SK-N-SH (cell line): ENCODE measurements at regions of chr14 and their contacts with region 1.

Region 1: DNA sequence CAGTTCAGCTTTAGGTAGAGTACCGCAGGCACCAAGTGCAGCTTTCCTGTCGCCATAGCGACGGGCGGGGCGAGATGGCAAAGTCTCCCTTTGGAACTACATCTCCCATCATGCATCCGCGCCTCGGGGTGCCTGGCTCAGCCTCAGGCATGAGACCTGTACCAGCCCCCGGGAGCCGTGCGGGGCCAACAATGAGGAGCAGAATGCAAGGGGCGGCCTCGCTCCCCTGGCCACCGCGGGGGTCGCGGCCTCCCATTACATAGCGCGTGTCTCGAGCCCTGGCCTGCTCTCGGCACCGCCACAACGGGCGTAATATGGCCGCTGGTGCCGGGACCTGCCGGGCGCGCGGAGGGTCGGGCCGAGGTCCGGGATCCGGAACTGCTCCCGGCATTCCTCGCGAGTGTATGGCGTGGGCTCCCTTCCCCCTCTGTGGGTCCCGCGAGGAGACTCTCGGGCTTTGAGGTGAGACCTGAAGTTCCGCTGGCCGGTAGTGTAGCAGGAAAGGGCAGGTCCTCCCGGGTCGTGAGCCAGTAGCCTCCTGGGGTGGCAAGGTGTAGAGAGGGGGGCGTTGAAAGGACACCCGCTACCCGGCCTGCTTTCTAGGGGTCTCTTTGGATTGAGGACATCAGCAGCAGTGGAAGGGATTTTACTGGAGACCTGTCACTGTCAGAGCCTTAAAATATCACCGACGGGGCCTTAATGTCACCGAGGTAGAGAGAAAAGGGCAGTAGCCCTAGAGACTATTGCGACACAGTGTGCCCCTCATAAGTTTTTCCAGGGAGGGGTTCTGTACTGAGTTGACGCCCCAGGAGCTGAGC is at the start of gene THTPA:
- DNase-seq: peak; percentile 92
- H3K4me3 ChIP-seq: peak within 1 kb of the TSS; percentile 76 to 93
- H3K27ac ChIP-seq: peak within 1 kb of the TSS; percentile 74 to 91
- H3K4me1 ChIP-seq: peaks cover 5 to 15% of the 10 kb centered on the region in 2 experiments; a peak in 1 of 4 replicates
- H3K27me3 ChIP-seq: no peaks in the 10 kb centered on the region
- CTCF ChIP-seq: no peak
- EP300 ChIP-seq: no peak
- RAD21 ChIP-seq: no peak
- polyA plus RNA-seq, gene THTPA: 15.5 and 16.3 TPM in 2 replicates

Region 2: DNA sequence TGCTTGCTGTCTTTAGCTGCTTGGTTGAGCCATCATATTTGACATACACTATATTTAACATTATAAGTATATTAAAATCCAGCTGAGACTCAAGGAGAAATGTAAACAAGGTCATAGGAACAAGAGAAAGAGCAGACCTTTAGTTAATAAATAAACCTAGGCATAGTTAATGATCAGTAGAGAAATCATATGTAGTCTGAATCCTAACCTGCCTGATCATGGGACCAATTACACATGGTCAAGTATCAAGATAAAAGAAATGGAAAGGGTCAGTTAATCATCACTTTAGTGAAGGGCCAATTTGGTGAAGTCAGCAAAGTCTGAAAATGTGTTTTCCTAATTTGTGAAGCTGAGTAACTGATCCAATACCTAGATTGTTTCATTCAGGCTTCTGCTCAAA is 310.8 kb before region 1 on chr14:
- CTCF ChIA-PET with region 1: no interaction called
- POLR2A ChIA-PET with region 1: no interaction called
- DNase-seq: no peak
- H3K4me3 ChIP-seq: no peak overlapping the region
- H3K27ac ChIP-seq: no peak overlapping the region
- H3K4me1 ChIP-seq: no peaks in the 10 kb centered on the region
- H3K27me3 ChIP-seq: peaks cover 29% of the 10 kb centered on the region; the same call in 1 of the 2 replicates
- CTCF ChIP-seq: no peak
- EP300 ChIP-seq: no peak
- RAD21 ChIP-seq: no peak

Region 3: DNA sequence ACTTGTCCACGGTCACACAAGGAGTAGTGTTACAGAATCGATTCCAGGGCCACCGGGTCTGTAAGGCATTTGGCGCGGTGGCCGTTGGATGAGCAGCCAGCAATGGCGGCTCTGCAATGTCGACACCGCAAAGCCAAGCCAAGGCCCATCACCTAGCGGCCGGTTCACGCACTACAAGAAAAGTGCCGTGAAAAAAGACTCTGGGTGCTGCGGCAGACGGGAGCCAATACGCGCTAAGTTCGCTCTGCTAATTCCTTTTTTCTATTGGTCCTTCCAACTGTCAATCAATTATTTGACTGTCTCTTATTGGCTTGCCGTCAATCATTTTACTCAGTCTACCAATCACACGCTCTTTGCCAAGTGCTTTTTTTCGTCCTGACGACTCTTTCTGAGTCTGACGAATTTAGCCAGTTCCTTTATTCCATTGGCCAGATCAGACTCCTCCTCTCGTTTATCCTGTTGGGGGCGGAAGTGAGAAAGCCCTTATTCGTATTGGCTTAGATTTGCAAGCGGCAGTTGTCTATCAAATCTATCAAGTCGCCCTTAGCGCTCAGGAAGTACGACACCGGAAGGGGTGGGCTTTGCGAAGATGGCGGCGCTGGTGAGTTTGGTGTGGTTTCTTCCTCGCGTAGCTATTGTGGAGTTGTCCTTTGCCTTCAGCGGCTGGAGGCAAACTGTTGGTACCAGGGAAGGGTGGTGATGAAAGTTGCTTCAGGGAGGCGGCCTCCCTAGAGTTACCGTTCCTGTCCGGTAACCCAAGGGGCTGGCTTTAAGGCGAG is 86.8 kb before region 1 on chr14 and contains the start of gene NGDN:
- CTCF ChIA-PET with region 1: interaction called, 785 read pairs
- POLR2A ChIA-PET with region 1: interaction called, 3 read pairs
- DNase-seq: peak; percentile 86
- H3K4me3 ChIP-seq: peak within 1 kb of the TSS; percentile 92 to 96
- H3K27ac ChIP-seq: peak within 1 kb of the TSS; percentile 61 to 88
- H3K4me1 ChIP-seq: peaks cover 0 to 7% of the 10 kb centered on the region in 2 experiments; a peak in 2 of 4 replicates
- H3K27me3 ChIP-seq: no peaks in the 10 kb centered on the region
- CTCF ChIP-seq: peak; percentile 78
- EP300 ChIP-seq: no peak
- RAD21 ChIP-seq: peak; percentile 69
- polyA plus RNA-seq, gene NGDN: 64.3 and 85.9 TPM in 2 replicates

Region 4: GRCh38 chr14:23512156-23512555 is 43.9 kb before region 1 on chr14:
- CTCF ChIA-PET with region 1: interaction called, 40 read pairs
- POLR2A ChIA-PET with region 1: interaction called, 4 read pairs
- DNase-seq: peak; percentile 77
- H3K4me3 ChIP-seq: peak overlapping the region in 1 of 2 experiments; percentile 34; a peak in 2 of 4 replicates
- H3K27ac ChIP-seq: peak overlapping the region in 1 of 2 experiments; percentile 63; a peak in 1 of 4 replicates
- H3K4me1 ChIP-seq: peaks cover 0 to 38% of the 10 kb centered on the region in 2 experiments; a peak in 1 of 4 replicates
- H3K27me3 ChIP-seq: no peaks in the 10 kb centered on the region
- CTCF ChIP-seq: no peak
- EP300 ChIP-seq: no peak
- RAD21 ChIP-seq: no peak

Region 5: GRCh38 chr14:23567192-23568020 is 11.3 kb after region 1 on chr14 and contains the start of gene AP1G2:
- CTCF ChIA-PET with region 1: interaction called, 67 read pairs
- POLR2A ChIA-PET with region 1: interaction called, 5 read pairs
- DNase-seq: peak; percentile 92
- H3K4me3 ChIP-seq: peak within 1 kb of the TSS; percentile 64 to 86
- H3K27ac ChIP-seq: peak within 1 kb of the TSS; percentile 39 to 82; a peak in 3 of 4 replicates
- H3K4me1 ChIP-seq: peaks cover 0 to 34% of the 10 kb centered on the region in 2 experiments; a peak in 1 of 4 replicates
- H3K27me3 ChIP-seq: no peaks in the 10 kb centered on the region
- CTCF ChIP-seq: 0 out of 2 replicates have a peak, but pooled peaks have one; percentile 4
- EP300 ChIP-seq: no peak
- RAD21 ChIP-seq: no peak
- polyA plus RNA-seq, gene AP1G2: 88.3 and 114 TPM in 2 replicates